ENCODE measurements at regions of chr15 and their contacts with region 1.

Region 1: GRCh38 chr15:41904541-41905005 is 10.7 kb upstream of the SPTBN5 start:
- DNase-seq: peak; percentile 82
- ATAC-seq: peak; percentile 92
- H3K4me3 ChIP-seq: no peak overlapping the region
- H3K4me3 Mint-ChIP-seq: no peak overlapping the region
- H3K27ac ChIP-seq: no peak overlapping the region
- H3K27ac Mint-ChIP-seq: peak overlapping the region; percentile 41
- H3K4me1 ChIP-seq: peaks cover 0 to 4% of the 10 kb centered on the region in 2 donors
- H3K4me1 Mint-ChIP-seq: peaks cover 6% of the 10 kb centered on the region
- H3K27me3 ChIP-seq: no peaks in the 10 kb centered on the region
- H3K27me3 Mint-ChIP-seq: no peaks in the 10 kb centered on the region
- CTCF ChIP-seq: peak; percentile 89

Region 2: GRCh38 chr15:41603941-41604911 is 300.3 kb before region 1 on chr15:
- CTCF ChIA-PET with region 1: interaction called, 23 read pairs
- POLR2A ChIA-PET with region 1: no interaction called
- intact Hi-C with region 1: loop called (anchors 5 kb)
- DNase-seq: peak; percentile 74
- ATAC-seq: peak; percentile 85
- H3K4me3 ChIP-seq: peak overlapping the region in 3 of 5 experiments; percentile 2 to 31 (median 29)
- H3K4me3 Mint-ChIP-seq: peak overlapping the region; percentile 77
- H3K27ac ChIP-seq: no peak overlapping the region
- H3K27ac Mint-ChIP-seq: no peak overlapping the region
- H3K4me1 ChIP-seq: peaks cover 8 to 10% of the 10 kb centered on the region in 2 donors
- H3K4me1 Mint-ChIP-seq: peaks cover 9% of the 10 kb centered on the region
- H3K27me3 ChIP-seq: peaks cover 0 to 17% (median 5%) of the 10 kb centered on the region in 4 experiments
- H3K27me3 Mint-ChIP-seq: peaks cover 34% of the 10 kb centered on the region
- CTCF ChIP-seq: peak; percentile 80

Region 3: DNA sequence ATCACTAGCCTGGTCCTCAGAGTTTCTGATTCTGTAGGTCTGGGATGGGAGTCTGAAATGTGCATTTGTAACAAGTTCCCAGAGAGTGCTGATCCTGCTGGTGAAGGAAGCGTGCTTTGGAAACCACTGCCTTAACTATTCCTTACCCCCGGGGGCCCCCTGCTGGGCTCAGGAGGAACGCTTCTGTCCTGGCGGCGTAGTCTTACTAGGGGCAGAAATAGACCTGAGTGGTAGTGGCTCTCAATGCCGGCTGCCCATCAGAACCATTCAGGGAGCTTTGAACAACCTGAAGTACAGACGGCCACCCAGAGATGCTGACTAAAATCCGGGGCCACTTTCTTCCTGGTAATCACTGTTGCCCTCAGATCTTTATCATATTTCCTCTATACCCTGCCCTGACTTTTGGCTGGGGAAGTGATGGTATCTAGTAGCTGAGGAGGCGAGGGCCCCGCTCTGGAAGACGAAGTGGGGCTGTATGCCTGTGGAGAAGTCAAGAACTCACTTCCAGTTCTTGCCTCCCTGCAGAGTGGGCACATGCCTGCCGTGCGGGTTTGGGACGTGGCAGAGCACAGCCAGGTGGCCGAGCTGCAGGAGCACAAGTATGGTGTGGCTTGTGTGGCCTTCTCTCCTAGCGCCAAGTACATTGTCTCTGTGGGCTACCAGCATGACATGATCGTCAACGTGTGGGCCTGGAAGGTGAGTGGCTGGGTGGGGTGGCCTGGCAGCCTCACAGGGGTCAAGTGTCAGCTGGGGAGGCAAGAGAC is 93.0 kb before region 1 on chr15:
- CTCF ChIA-PET with region 1: interaction called, 92 read pairs
- POLR2A ChIA-PET with region 1: no interaction called
- intact Hi-C with region 1: loop called (anchors 1 kb)
- DNase-seq: peak; percentile 82
- ATAC-seq: peak; percentile 92
- H3K4me3 ChIP-seq: no peak overlapping the region
- H3K4me3 Mint-ChIP-seq: no peak overlapping the region
- H3K27ac ChIP-seq: no peak overlapping the region
- H3K27ac Mint-ChIP-seq: no peak overlapping the region
- H3K4me1 ChIP-seq: peaks cover 5 to 20% of the 10 kb centered on the region in 2 donors
- H3K4me1 Mint-ChIP-seq: peaks cover 10% of the 10 kb centered on the region
- H3K27me3 ChIP-seq: no peaks in the 10 kb centered on the region
- H3K27me3 Mint-ChIP-seq: no peaks in the 10 kb centered on the region
- CTCF ChIP-seq: peak; percentile 88

Region 4: DNA sequence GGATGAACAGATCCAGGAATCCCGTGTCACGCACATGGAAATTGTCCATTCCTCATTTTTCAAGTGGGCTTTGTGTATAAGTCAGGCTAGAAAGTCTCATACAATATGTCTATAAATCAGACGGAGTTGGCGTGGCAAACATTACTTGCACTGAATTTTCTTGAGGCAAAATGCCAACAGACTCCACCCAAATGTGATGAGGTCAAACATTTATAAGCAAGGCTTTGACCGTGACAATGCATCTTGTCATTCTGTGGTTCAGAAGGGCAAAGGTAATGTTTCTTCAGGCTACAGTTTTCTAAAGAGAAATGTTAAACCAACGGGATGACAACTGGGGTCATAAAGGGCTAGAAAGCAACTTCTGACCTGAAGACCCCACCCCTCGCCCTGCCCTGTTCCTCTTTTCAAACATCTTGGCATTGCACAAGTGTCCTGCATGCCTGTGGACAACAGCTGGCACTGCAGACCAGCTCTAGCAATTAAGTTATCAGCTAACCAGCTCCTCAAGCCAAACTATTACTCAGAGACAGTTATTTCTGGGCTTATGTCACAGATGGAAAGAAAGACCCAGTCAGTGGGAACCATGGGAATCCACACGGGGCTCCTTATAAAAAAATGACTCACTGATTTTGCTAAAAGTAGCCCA is 25.8 kb after region 1 on chr15:
- CTCF ChIA-PET with region 1: interaction called, 15 read pairs
- POLR2A ChIA-PET with region 1: no interaction called
- intact Hi-C with region 1: no loop called
- DNase-seq: no peak
- ATAC-seq: no peak
- H3K4me3 ChIP-seq: no peak overlapping the region
- H3K4me3 Mint-ChIP-seq: peak overlapping the region; percentile 67
- H3K27ac ChIP-seq: peak overlapping the region; percentile 79 to 89
- H3K27ac Mint-ChIP-seq: peak overlapping the region; percentile 88
- H3K4me1 ChIP-seq: peaks cover 62 to 75% of the 10 kb centered on the region in 2 donors
- H3K4me1 Mint-ChIP-seq: peaks cover 61% of the 10 kb centered on the region
- H3K27me3 ChIP-seq: no peaks in the 10 kb centered on the region
- H3K27me3 Mint-ChIP-seq: no peaks in the 10 kb centered on the region
- CTCF ChIP-seq: no peak

Measured in B cell (primary cell).